Endothelial cell of umbilical vein (primary cell): ENCODE measurements at regions of chr10 and their contacts with region 1.

Region 1: GRCh38 chr10:11036407-11037011 is 18.8 kb downstream of the CELF2 start:
- DNase-seq: peak; percentile 84
- H3K4me3 ChIP-seq: no peak overlapping the region
- H3K27ac ChIP-seq: peak overlapping the region; percentile 92
- H3K4me1 ChIP-seq: peaks cover 19% of the 10 kb centered on the region
- H3K27me3 ChIP-seq: no peaks in the 10 kb centered on the region
- CTCF ChIP-seq: peak; percentile 64 to 67
- POLR2A ChIP-seq: no peak

Region 2: GRCh38 chr10:9342885-9343570 is 1693.5 kb before region 1 on chr10:
- CTCF ChIA-PET with region 1: interaction called, 112 read pairs
- POLR2A ChIA-PET with region 1: no interaction called
- dilution Hi-C with region 1: no loop called
- intact Hi-C with region 1: loop called (anchors 1 kb)
- DNase-seq: peak; percentile 42
- H3K4me3 ChIP-seq: no peak overlapping the region
- H3K27ac ChIP-seq: no peak overlapping the region
- H3K4me1 ChIP-seq: no peaks in the 10 kb centered on the region
- H3K27me3 ChIP-seq: no peaks in the 10 kb centered on the region
- CTCF ChIP-seq: peak; percentile 48 to 59
- POLR2A ChIP-seq: no peak

Region 3: GRCh38 chr10:10233229-10233628 is 803.3 kb before region 1 on chr10:
- CTCF ChIA-PET with region 1: interaction called, 3 read pairs
- POLR2A ChIA-PET with region 1: no interaction called
- dilution Hi-C with region 1: no loop called
- intact Hi-C with region 1: loop called (anchors 5 kb)
- DNase-seq: peak; percentile 9
- H3K4me3 ChIP-seq: no peak overlapping the region
- H3K27ac ChIP-seq: no peak overlapping the region
- H3K4me1 ChIP-seq: no peaks in the 10 kb centered on the region
- H3K27me3 ChIP-seq: no peaks in the 10 kb centered on the region
- CTCF ChIP-seq: no peak
- POLR2A ChIP-seq: no peak

Region 4: GRCh38 chr10:10786109-10787090 is 250.1 kb before region 1 on chr10:
- CTCF ChIA-PET with region 1: interaction called, 11 read pairs
- POLR2A ChIA-PET with region 1: no interaction called
- dilution Hi-C with region 1: no loop called
- intact Hi-C with region 1: no loop called
- DNase-seq: peak; percentile 60
- H3K4me3 ChIP-seq: no peak overlapping the region
- H3K27ac ChIP-seq: peak overlapping the region; percentile 80
- H3K4me1 ChIP-seq: peaks cover 26% of the 10 kb centered on the region
- H3K27me3 ChIP-seq: no peaks in the 10 kb centered on the region
- CTCF ChIP-seq: no peak
- POLR2A ChIP-seq: no peak

Region 5: GRCh38 chr10:10831085-10831484 is 205.4 kb before region 1 on chr10:
- CTCF ChIA-PET with region 1: interaction called, 7 read pairs
- POLR2A ChIA-PET with region 1: interaction called, 4 read pairs
- dilution Hi-C with region 1: no loop called
- intact Hi-C with region 1: loop called (anchors 1 kb)
- DNase-seq: peak; percentile 96
- H3K4me3 ChIP-seq: peak overlapping the region in 1 of 3 experiments; percentile 2
- H3K27ac ChIP-seq: peak overlapping the region; percentile 98
- H3K4me1 ChIP-seq: peaks cover 23% of the 10 kb centered on the region
- H3K27me3 ChIP-seq: no peaks in the 10 kb centered on the region
- CTCF ChIP-seq: no peak
- POLR2A ChIP-seq: no peak

Region 6: DNA sequence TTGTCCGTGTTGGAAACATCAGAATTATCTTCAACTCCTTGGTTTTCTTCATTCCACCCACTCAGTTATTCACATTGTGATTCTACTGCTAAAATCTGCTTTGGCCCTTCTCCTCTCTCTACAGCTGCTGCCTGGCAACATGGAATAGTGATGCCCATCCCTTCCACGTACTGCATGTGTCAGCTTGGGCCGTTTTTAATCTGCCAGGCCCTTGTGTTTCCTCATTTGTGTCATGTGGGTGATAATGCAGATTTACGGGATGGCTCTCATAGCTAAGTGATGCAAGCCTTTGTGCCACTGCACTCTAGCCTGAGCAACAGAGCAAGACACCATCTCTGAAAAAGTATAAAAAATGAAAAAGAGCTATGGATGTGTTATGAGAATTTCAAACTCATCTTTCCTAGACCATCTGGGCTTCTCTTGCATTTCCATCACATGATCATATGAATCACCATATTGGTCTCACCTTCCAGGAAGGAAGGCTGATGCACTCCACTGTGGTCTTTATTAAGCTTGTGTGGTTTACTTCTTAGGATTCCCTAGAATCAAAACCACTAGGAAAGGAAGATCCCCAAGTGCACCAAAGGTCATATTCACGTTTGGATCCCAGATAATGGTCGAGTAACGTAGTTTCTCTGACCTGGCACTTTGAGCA is 39.4 kb before region 1 on chr10:
- CTCF ChIA-PET with region 1: no interaction called
- POLR2A ChIA-PET with region 1: no interaction called
- dilution Hi-C with region 1: no loop called
- intact Hi-C with region 1: no loop called
- DNase-seq: no peak
- H3K4me3 ChIP-seq: no peak overlapping the region
- H3K27ac ChIP-seq: no peak overlapping the region
- H3K4me1 ChIP-seq: no peaks in the 10 kb centered on the region
- H3K27me3 ChIP-seq: no peaks in the 10 kb centered on the region
- CTCF ChIP-seq: no peak
- POLR2A ChIP-seq: no peak

Region 7: DNA sequence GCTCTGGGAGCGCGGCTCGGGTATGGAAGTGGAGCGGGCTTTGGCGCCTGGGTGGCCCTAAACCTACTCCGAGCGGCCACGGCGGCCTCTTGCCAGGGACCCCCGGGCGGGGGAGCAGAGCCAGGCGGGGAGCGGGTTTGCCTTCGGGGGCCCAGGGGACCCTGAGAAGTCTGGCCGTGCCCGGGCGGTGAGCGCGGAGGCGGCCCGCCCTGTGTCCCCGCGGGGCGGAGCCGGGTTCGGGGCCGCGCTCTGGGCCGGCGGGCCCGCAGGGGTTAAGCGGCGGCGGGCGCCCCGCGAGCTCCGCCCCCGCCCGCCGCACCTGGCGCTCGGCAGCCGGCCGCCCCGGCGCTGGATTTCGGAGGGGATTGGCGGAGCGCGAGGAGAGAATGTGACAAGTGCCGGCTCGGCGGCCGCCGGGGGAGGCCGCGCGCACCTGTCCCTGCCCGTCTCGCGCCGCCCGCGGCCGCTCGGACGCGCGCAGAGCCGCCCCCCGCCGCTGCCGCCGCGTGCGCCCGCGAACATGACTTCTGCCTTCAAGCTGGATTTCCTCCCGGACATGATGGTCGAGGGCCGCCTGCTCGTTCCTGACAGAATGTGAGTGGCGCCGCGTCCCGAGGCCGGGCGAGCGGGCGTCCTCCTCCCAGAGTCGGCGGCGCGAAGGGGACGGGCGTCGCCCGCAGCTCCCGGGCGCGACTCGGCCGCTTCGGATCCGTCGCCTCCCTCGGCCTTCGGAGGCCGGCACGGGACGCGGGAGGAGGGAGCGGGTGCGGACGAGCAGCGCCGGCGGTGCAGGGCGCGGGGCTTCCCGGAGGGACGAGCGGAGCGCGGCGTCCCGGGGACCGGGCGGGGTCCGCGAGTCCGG is 18.7 kb before region 1 on chr10 and contains the start of gene CELF2:
- CTCF ChIA-PET with region 1: interaction called, 36 read pairs
- POLR2A ChIA-PET with region 1: no interaction called
- dilution Hi-C with region 1: no loop called
- intact Hi-C with region 1: loop called (anchors 1 kb)
- DNase-seq: peak; percentile 64
- H3K4me3 ChIP-seq: peak within 1 kb of the TSS; percentile 77 to 91 (median 88)
- H3K27ac ChIP-seq: peak within 1 kb of the TSS; percentile 71
- H3K4me1 ChIP-seq: peaks cover 9% of the 10 kb centered on the region
- H3K27me3 ChIP-seq: no peaks in the 10 kb centered on the region
- CTCF ChIP-seq: no peak
- POLR2A ChIP-seq: peak; percentile 26
- total RNA-seq, gene CELF2: 35.5 and 42.6 TPM in 2 replicates

Region 8: DNA sequence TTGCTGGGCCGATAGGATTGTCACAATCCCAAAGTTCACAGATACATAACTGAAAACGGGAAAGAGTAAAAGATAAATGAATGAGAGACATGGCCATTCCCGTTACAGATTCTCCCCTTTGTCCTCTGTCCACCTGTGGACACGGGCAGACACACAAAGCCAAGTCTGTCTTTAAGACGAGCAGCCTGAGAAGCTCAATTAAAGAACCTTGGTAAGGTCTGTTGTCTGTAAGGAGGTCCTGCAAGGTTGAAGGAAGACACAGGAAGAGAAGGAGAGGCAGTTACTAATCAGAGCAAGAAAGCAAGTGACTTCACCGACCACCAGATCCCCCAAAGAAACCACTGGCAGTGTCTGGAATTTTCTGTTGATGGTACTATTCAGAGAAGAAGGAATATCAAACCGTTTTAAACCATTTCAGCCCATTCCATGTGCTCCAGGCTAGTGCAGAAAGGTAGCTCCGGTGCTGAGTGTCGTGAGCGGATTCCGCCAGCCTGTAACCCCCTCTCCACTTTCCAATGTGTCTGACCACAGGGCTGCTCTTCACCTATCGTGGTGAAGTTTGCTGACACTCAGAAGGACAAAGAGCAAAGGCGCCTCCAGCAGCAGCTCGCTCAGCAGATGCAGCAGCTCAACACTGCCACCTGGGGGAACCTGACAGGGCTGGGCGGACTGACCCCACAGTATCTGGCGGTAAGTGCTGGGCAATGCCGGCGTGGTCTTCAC is 233.8 kb after region 1 on chr10:
- CTCF ChIA-PET with region 1: interaction called, 27 read pairs
- POLR2A ChIA-PET with region 1: no interaction called
- dilution Hi-C with region 1: no loop called
- intact Hi-C with region 1: loop called (anchors 1 kb)
- DNase-seq: peak; percentile 81
- H3K4me3 ChIP-seq: no peak overlapping the region
- H3K27ac ChIP-seq: no peak overlapping the region
- H3K4me1 ChIP-seq: no peaks in the 10 kb centered on the region
- H3K27me3 ChIP-seq: no peaks in the 10 kb centered on the region
- CTCF ChIP-seq: peak; percentile 96 to 98
- POLR2A ChIP-seq: no peak